Naive thymus-derived CD4-positive, alpha-beta T cell (primary cell): ENCODE measurements at regions of chr20 and their contacts with region 1.

Region 1: GRCh38 chr20:49575551-49576060 is 7.7 kb upstream of the PTGIS start:
- DNase-seq: no peak
- ATAC-seq: no peak
- H3K4me3 ChIP-seq: no peak overlapping the region
- H3K4me3 Mint-ChIP-seq: no peak overlapping the region
- H3K27ac ChIP-seq: no peak overlapping the region
- H3K27ac Mint-ChIP-seq: no peak overlapping the region
- H3K4me1 ChIP-seq: no peaks in the 10 kb centered on the region
- H3K4me1 Mint-ChIP-seq: peaks cover 0 to 63% (median 0%) of the 10 kb centered on the region in 7 donors
- H3K27me3 ChIP-seq: no peaks in the 10 kb centered on the region
- H3K27me3 Mint-ChIP-seq: peaks cover 6 to 28% (median 21%) of the 10 kb centered on the region in 5 donors

Region 2: DNA sequence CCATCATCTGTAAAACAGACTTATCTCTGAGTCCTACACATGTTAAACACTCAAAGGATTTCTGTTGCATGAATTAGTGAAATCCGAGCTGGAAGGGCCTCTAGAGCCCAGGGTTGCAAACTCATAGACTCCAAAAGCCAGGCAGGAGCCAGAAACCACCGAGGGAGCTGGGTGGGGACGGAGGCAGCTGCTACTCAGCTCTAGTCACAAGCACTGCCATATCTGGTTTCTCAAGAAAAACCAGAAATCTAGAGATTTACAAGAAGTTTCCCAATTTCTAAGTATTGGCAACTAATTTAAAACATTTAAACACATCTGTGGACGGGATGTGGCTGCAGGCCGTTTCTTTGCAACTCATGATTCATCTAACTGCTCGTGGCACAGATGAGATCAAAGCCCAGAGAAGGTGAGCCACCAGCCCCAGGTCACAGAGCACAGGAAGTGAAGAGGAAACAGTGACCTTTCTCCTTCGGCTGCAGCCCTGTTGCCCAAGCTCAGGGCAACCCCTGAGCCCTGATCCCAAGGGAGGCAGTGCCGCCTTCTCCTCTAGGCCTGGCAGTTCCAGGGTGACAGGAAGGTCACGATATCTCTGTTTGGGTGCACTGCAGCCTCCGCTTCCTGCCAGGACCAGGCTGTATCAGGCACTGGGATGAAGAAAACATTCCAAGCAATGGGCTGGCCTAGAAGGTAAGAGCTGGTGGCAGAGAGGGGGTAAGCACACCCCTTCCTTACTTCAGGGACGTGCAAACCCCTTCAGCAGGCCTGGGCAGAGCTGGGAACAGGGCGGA is 18.7 kb after region 1 on chr20:
- CTCF ChIA-PET with region 1: no interaction called
- POLR2A ChIA-PET with region 1: no interaction called
- intact Hi-C with region 1: loop called in 1 of 2 experiments (anchors 2 kb)
- DNase-seq: peak in 1 of 9 donors; percentile 76
- ATAC-seq: no peak
- H3K4me3 ChIP-seq: no peak overlapping the region
- H3K4me3 Mint-ChIP-seq: peak overlapping the region in 1 of 10 donors; percentile 85
- H3K27ac ChIP-seq: no peak overlapping the region
- H3K27ac Mint-ChIP-seq: peak overlapping the region in 1 of 9 donors; percentile 97
- H3K4me1 ChIP-seq: peaks cover 0 to 38% of the 10 kb centered on the region in 2 donors
- H3K4me1 Mint-ChIP-seq: peaks cover 0 to 86% (median 4%) of the 10 kb centered on the region in 7 donors
- H3K27me3 ChIP-seq: no peaks in the 10 kb centered on the region
- H3K27me3 Mint-ChIP-seq: peaks cover 0 to 13% (median 4%) of the 10 kb centered on the region in 5 donors